Caco-2 (cell line): ENCODE measurements at regions of chr7 and their contacts with region 1.

Region 1: DNA sequence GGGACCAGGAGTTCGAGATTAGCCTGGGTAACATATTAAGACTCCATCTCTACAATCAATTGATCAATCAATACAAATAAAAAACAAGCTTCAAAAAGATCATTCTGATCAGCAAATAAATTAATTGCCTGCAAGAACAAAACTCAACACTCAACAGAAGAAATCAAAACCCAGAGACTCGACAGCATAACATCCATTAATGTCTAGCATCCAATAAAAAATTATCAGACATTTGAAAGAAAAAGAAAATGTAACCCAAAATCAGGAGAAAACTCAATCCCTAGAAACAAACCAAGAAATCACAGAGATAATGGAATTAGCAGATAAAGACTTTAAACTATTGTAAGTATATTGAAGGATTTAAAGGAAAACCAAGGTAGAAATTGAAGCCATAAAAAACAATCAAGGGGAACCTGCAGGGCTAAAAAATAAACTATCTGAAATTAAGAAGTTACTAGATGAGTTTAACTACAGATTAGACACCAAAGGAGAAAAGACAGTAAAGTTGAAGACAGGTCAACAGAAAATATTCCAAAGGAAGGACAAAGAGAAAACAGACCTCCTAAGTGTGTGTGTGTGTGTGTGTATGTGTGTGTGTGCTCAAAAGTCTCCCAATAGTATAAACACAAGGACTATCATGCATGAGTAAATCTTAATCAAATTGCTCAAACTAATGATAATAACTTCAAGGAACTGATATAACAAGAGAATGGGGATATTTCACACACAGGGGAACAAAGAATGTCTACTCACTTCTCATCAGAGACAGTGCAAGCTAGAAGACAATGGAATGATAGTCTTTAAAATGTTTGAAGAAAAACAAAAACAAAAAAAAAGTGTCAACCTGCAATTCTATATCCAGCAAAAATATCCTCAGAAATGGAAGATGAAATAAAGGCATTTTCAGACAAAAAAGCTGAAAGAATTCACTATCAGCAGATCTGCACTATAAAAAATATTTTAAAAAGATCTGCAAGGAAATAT is 7.7 kb downstream of the NUDCD3 start:
- DNase-seq: no peak
- H3K4me3 ChIP-seq: no peak overlapping the region
- H3K4me3 Mint-ChIP-seq: no peak overlapping the region
- H3K27ac Mint-ChIP-seq: no peak overlapping the region
- H3K4me1 ChIP-seq: no peaks in the 10 kb centered on the region
- H3K4me1 Mint-ChIP-seq: peaks cover 17% of the 10 kb centered on the region
- H3K27me3 ChIP-seq: no peaks in the 10 kb centered on the region
- H3K27me3 Mint-ChIP-seq: no peaks in the 10 kb centered on the region
- CTCF ChIP-seq: no peak

Region 2: GRCh38 chr7:44530990-44531389 is 48.2 kb after region 1 on chr7:
- CTCF ChIA-PET with region 1: no interaction called
- POLR2A ChIA-PET with region 1: interaction called, 3 read pairs
- intact Hi-C with region 1: loop called (anchors 1 kb)
- DNase-seq: no peak
- H3K4me3 ChIP-seq: no peak overlapping the region
- H3K4me3 Mint-ChIP-seq: no peak overlapping the region
- H3K27ac Mint-ChIP-seq: no peak overlapping the region
- H3K4me1 ChIP-seq: no peaks in the 10 kb centered on the region
- H3K4me1 Mint-ChIP-seq: peaks cover 6% of the 10 kb centered on the region
- H3K27me3 ChIP-seq: no peaks in the 10 kb centered on the region
- H3K27me3 Mint-ChIP-seq: no peaks in the 10 kb centered on the region
- CTCF ChIP-seq: no peak